PC-9 (cell line): ENCODE measurements at regions of chr1 and their contacts with region 1.

Region 1: DNA sequence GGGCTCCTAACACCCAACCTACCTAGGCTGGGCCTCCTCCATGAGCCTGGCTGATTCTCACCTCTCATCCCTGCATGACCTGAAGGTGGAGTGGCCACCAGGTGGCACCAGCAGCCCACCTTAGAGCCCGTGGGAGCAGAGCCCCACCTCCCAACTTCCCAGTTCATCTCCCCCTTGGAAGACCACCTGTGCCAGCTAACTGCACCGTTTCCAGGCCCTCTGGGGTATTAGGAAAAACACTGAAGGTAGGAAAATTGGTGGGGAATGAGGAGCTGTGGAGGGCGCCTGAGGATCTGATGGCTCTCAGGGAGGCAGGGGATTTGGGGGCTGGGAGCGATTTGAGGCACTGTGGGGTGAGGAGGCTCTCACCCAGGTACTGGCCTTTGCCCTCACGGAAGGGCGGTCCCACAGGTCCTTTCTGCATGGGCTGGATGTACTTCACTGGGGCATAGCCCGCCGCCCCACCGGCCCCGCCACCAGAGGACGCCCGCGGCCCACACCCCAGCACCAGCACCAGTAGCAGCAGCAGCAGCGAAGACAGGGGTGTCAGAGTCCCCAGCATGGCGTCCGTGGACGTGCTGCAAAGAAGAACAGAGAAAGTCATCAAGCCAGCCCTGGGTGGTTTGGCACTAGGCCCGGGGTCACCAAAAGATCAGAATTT is 11.1 kb downstream of the ADPRS start:
- DNase-seq: peak; percentile 71 to 94
- H3K4me3 ChIP-seq: no peak overlapping the region
- H3K27ac ChIP-seq: no peak overlapping the region
- H3K4me1 ChIP-seq: peaks cover 4% of the 10 kb centered on the region; the same call in 1 of the 2 replicates
- H3K27me3 ChIP-seq: no peaks in the 10 kb centered on the region
- CTCF ChIP-seq: peak; percentile 91

Region 2: GRCh38 chr1:36134505-36135329 is 34.9 kb after region 1 on chr1:
- CTCF ChIA-PET with region 1: interaction called, 15 read pairs
- POLR2A ChIA-PET with region 1: no interaction called
- intact Hi-C with region 1: loop called (anchors 1 kb)
- DNase-seq: peak; percentile 55 to 61
- H3K4me3 ChIP-seq: no peak overlapping the region
- H3K27ac ChIP-seq: peak overlapping the region; percentile 38; the same call in 1 of the 2 replicates
- H3K4me1 ChIP-seq: 0 out of 2 replicates have a peak, but pooled peaks cover 5% of the 10 kb centered on the region
- H3K27me3 ChIP-seq: no peaks in the 10 kb centered on the region
- CTCF ChIP-seq: peak; percentile 78

Region 3: GRCh38 chr1:36187800-36188593 is 88.2 kb after region 1 on chr1:
- CTCF ChIA-PET with region 1: interaction called, 3 read pairs
- POLR2A ChIA-PET with region 1: no interaction called
- intact Hi-C with region 1: loop called (anchors 1 kb)
- DNase-seq: peak; percentile 78 to 88
- H3K4me3 ChIP-seq: no peak overlapping the region
- H3K27ac ChIP-seq: peak overlapping the region; percentile 53
- H3K4me1 ChIP-seq: peaks cover 9% of the 10 kb centered on the region; the same call in 1 of the 2 replicates
- H3K27me3 ChIP-seq: no peaks in the 10 kb centered on the region
- CTCF ChIP-seq: peak; percentile 92

Region 4: DNA sequence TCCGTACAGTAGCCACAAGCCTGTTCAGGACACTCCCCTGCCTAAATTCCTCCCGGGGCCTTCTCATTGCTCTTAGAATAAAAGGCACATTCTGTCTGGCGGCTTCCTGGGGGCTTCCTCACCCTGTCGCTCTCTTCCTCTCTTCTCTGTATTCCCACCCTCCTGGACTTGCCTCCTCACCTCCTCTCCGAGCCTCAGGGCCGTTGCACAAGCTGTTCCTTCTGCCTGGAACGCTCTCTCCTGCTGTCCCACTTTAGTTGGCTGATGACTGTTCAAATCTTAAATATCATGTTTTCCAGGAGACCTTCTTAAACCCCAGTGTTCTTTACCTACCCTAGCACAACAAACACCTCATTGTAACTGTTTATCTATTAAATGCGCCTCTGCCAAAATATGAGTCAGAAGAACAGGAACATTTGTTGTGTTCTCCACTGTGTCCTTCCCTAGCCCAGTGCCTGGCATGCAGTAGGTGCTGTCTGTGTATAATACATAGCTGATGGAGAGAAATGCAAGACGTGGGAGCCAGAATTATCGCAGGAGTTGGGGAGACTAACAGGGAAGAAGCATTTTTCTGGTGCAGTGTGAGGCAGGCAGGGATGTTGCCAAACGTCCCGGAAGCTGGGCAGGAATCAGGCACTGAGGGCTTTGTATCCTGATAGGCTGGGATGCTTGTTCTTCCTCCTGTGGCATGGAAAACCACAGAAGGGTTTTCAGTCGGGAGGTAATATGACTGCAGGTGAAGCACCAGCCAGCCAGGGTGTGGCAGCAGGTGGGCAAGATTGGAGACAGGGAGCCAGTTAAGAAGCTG is 100.3 kb after region 1 on chr1:
- CTCF ChIA-PET with region 1: interaction called, 12 read pairs
- POLR2A ChIA-PET with region 1: no interaction called
- intact Hi-C with region 1: no loop called
- DNase-seq: peak; percentile 45 to 71
- H3K4me3 ChIP-seq: no peak overlapping the region
- H3K27ac ChIP-seq: no peak overlapping the region; the same call in 1 of the 2 replicates
- H3K4me1 ChIP-seq: peaks cover 35% of the 10 kb centered on the region
- H3K27me3 ChIP-seq: no peaks in the 10 kb centered on the region
- CTCF ChIP-seq: no peak

Region 5: GRCh38 chr1:36251794-36252481 is 152.1 kb after region 1 on chr1:
- CTCF ChIA-PET with region 1: no interaction called
- POLR2A ChIA-PET with region 1: no interaction called
- intact Hi-C with region 1: no loop called
- DNase-seq: no peak
- H3K4me3 ChIP-seq: no peak overlapping the region
- H3K27ac ChIP-seq: peak overlapping the region; percentile 27; the same call in 1 of the 2 replicates
- H3K4me1 ChIP-seq: peaks cover 67% of the 10 kb centered on the region
- H3K27me3 ChIP-seq: no peaks in the 10 kb centered on the region
- CTCF ChIP-seq: no peak

Region 6: DNA sequence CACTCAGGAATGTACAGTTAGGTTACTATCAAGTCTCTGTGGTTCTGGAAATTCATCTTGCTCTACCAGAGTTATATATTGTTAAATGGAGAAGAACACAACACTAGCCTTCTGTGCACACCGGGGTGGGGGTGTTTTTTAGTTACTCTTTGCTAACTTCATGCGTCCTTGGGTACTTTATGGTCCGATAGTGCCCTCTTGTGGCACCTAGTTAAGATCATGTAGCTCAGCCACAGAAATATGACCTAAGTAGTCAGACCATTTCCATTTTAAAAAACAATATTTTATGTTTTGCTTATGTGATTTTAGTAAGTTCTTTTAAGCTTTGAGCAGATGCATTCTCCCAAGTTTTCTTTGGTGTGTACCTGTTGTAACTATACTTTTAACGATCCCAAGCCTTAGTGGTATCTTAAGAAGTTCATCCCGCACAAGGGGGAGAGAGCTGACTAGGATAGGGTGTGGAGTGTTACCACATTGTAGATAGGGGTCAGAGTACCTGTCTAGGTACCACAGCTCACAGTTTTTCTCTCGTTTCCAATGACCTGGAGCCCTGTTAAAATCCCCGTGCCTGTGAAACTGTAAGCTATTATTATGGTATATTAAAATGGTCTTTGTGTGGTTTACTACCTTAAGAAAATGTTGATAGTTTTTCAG is 185.8 kb after region 1 on chr1:
- CTCF ChIA-PET with region 1: interaction called, 3 read pairs
- POLR2A ChIA-PET with region 1: no interaction called
- intact Hi-C with region 1: loop called (anchors 1 kb)
- DNase-seq: peak; percentile 56 to 73
- H3K4me3 ChIP-seq: no peak overlapping the region
- H3K27ac ChIP-seq: peak overlapping the region; percentile 31; the same call in 1 of the 2 replicates
- H3K4me1 ChIP-seq: no peaks in the 10 kb centered on the region
- H3K27me3 ChIP-seq: no peaks in the 10 kb centered on the region
- CTCF ChIP-seq: peak; percentile 85